ENCODE measurements at regions of chr14 and their contacts with region 1.

Region 1: DNA sequence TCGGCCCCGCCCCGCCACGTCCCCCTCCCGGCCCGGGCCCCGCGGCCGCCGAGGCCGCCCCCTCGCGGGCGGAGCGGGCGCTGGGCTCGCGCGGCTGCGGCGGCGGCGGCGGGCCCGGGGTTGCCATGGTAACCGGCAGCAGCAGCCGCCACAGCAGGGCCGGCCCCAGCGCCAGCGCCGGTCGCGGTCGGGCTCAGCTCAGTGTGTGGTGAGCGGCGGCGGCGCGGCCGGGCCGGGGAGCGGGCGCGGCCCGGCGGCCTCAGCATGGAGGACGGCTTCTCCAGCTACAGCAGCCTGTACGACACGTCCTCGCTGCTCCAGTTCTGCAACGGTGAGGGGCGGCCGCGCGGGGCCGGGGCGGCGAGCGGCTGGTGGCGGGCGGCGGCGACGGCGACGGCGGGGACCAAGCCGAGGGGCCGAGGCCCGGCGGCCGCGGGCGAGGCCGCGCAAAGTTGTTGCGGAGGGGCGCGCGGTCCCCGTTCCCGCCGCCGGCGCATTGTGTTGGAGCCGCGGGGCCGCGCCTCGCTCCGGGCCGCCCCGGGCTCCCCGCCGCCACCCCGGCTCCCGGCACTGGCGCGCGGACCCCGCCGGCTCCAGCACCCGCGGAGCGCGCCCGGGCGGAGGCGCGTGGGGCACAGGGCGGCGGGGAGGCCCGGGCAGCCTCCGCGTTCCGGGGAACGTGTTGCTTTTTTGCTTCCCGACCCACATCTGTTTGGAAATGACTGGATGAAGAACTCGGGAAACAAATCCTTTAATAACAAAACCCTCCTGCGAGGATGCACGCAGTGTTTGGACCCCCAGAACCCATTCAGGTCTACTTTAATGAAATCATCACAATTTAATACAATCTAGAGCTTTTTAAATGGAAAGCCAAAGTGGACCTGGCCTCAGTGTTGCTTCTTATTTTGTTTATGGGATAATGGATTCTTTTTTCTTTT is at the start of gene EML1:
- DNase-seq: peak; percentile 78 to 85
- H3K4me3 ChIP-seq: peak within 1 kb of the TSS; percentile 44 to 69
- H3K27ac ChIP-seq: peak within 1 kb of the TSS; percentile 91 to 95
- H3K4me1 ChIP-seq: peaks cover 0 to 4% of the 10 kb centered on the region in 2 donors
- H3K27me3 ChIP-seq: no peaks in the 10 kb centered on the region
- CTCF ChIP-seq: peak in 2 of 4 experiments; percentile 46 to 56
- POLR2A ChIP-seq: no peak
- total RNA-seq, gene EML1: 51.4 to 184 (median 84.4) TPM

Region 2: DNA sequence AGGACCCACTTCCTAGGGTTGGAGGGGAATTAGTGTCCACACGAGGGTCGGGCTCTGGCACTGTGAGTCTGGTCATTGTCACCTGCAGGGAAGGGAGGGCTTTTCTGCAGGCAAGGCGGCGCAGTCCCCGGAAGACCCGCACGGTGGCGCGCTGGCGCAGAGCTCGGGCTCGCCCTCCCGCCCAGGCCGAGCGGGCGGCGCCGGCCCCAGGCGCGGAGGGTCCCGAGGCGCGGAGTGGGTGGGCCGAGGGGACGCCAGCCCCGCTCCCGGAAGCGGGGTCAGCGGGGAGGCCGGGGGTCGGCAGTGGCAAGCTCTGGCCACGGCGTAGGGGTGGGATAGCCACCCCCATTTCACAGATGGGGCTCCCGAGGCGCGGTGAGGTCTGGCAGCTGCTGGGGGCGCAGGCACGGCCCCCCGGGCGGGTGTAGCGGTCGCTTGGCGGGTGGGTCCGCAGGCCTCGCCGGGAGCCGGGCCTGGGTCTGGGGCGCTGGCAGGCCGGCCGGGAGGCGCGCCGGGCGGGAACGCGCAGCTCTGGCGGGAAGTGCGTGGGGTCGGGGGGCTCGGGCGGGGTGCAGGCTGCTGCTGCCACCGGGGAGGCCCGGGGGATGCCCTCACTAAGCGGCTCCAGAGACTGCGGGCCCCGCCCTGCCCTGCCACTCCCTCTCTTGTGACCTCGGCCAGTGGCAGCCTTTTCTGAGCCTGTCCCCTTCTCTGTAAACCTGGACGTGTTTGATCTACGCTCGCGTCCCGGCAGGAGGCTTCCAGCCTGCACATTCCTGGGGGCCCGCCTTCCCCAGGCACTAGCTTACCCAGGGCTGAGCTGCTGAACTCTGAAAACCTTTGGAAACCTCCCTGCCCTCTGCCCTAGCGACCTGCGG is 63.3 kb before region 1 on chr14:
- intact Hi-C with region 1: loop called (anchors 5 kb)
- DNase-seq: peak; percentile 57 to 78
- H3K4me3 ChIP-seq: peak overlapping the region; percentile 32 to 36
- H3K27ac ChIP-seq: peak overlapping the region in 1 of 2 donors; percentile 39
- H3K4me1 ChIP-seq: peaks cover 0 to 7% of the 10 kb centered on the region in 2 donors
- H3K27me3 ChIP-seq: no peaks in the 10 kb centered on the region
- CTCF ChIP-seq: peak; percentile 79 to 98 (median 96)
- POLR2A ChIP-seq: no peak